HCT116 (cell line): ENCODE measurements at regions of chr1 and their contacts with region 1.

Region 1: DNA sequence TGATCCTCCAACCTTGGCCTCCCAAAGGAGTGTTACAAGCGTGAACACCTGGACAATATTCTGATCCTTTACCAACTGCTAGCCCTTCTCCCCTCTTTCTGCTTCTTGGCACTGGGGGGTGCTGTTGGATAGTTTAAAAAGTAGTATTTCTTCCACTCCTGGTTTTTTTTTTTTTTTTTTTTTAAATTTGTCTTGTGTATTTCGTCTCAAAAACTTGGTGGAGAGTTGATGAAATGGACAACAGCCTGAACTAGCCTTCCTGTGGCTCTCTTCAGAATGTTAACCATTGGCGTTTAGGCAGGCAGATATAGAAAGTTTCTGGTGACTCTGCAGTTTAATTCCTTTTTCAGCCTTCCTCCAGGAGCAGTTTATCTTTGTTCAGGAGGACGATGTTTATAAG is 69.7 kb upstream of the USP24 start:
- DNase-seq: peak; percentile 29
- ATAC-seq: peak; percentile 81
- H3K4me3 ChIP-seq: no peak overlapping the region
- H3K27ac ChIP-seq: no peak overlapping the region
- H3K4me1 ChIP-seq: peaks cover 0 to 14% of the 10 kb centered on the region in 2 experiments; a peak in 1 of 4 replicates
- H3K27me3 ChIP-seq: no peaks in the 10 kb centered on the region
- CTCF ChIP-seq: peak; percentile 53 to 76 (median 73)
- POLR2A ChIP-seq: no peak
- RAD21 ChIP-seq: peak; percentile 82

Region 2: GRCh38 chr1:54791880-54792522 is 492.9 kb before region 1 on chr1:
- CTCF ChIA-PET with region 1: no interaction called
- POLR2A ChIA-PET with region 1: no interaction called
- RAD21 ChIA-PET with region 1: no interaction called
- intact Hi-C with region 1: no loop called
- DNase-seq: peak; percentile 51
- ATAC-seq: peak; percentile 54
- H3K4me3 ChIP-seq: no peak overlapping the region
- H3K27ac ChIP-seq: no peak overlapping the region
- H3K4me1 ChIP-seq: peaks cover 6 to 17% of the 10 kb centered on the region in 2 experiments; a peak in 3 of 4 replicates
- H3K27me3 ChIP-seq: no peaks in the 10 kb centered on the region
- CTCF ChIP-seq: peak; percentile 71 to 97 (median 93); a peak in 5 of 6 replicates
- POLR2A ChIP-seq: no peak
- RAD21 ChIP-seq: peak; percentile 81

Region 3: DNA sequence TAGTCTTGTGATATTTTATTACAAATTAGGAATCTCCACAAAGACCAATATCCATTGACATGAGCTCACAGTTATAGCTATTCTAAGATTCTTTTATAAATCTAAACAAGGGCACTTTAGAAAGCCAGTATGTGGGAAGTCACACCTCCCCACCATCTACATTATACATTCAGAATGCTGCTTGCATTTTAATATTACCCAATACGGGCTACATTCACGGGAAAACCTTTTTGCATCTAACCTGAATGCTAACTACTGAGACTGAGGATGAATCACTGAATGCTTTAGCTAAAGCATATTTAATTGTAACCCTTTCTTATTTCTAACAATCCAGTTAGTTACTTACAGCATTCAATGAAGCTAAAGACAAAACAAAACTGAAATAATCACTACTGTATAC is 192.4 kb before region 1 on chr1:
- CTCF ChIA-PET with region 1: no interaction called
- POLR2A ChIA-PET with region 1: no interaction called
- RAD21 ChIA-PET with region 1: no interaction called
- intact Hi-C with region 1: no loop called
- DNase-seq: no peak
- ATAC-seq: no peak
- H3K4me3 ChIP-seq: no peak overlapping the region
- H3K27ac ChIP-seq: no peak overlapping the region
- H3K4me1 ChIP-seq: no peaks in the 10 kb centered on the region
- H3K27me3 ChIP-seq: no peaks in the 10 kb centered on the region
- CTCF ChIP-seq: no peak
- POLR2A ChIP-seq: no peak
- RAD21 ChIP-seq: no peak

Region 4: GRCh38 chr1:55337801-55338447 is 53.1 kb after region 1 on chr1:
- CTCF ChIA-PET with region 1: interaction called, 8 read pairs
- POLR2A ChIA-PET with region 1: interaction called, 4 read pairs
- RAD21 ChIA-PET with region 1: interaction called in 1 of 2 experiments, 5 read pairs
- intact Hi-C with region 1: loop called (anchors 5 kb)
- DNase-seq: peak; percentile 36
- ATAC-seq: peak; percentile 90
- H3K4me3 ChIP-seq: no peak overlapping the region
- H3K27ac ChIP-seq: no peak overlapping the region
- H3K4me1 ChIP-seq: no peaks in the 10 kb centered on the region
- H3K27me3 ChIP-seq: no peaks in the 10 kb centered on the region
- CTCF ChIP-seq: peak; percentile 42 to 58 (median 44); a peak in 4 of 6 replicates
- POLR2A ChIP-seq: no peak
- RAD21 ChIP-seq: peak; percentile 71

Region 5: GRCh38 chr1:55893155-55893554 is 608.3 kb after region 1 on chr1:
- CTCF ChIA-PET with region 1: no interaction called
- POLR2A ChIA-PET with region 1: no interaction called
- RAD21 ChIA-PET with region 1: no interaction called
- intact Hi-C with region 1: loop called (anchors 2 kb)
- DNase-seq: peak; percentile 53
- ATAC-seq: peak; percentile 95
- H3K4me3 ChIP-seq: no peak overlapping the region
- H3K27ac ChIP-seq: no peak overlapping the region
- H3K4me1 ChIP-seq: no peaks in the 10 kb centered on the region
- H3K27me3 ChIP-seq: no peaks in the 10 kb centered on the region
- CTCF ChIP-seq: peak; percentile 47 to 59 (median 55); a peak in 5 of 6 replicates
- POLR2A ChIP-seq: no peak
- RAD21 ChIP-seq: peak; percentile 74

Region 6: DNA sequence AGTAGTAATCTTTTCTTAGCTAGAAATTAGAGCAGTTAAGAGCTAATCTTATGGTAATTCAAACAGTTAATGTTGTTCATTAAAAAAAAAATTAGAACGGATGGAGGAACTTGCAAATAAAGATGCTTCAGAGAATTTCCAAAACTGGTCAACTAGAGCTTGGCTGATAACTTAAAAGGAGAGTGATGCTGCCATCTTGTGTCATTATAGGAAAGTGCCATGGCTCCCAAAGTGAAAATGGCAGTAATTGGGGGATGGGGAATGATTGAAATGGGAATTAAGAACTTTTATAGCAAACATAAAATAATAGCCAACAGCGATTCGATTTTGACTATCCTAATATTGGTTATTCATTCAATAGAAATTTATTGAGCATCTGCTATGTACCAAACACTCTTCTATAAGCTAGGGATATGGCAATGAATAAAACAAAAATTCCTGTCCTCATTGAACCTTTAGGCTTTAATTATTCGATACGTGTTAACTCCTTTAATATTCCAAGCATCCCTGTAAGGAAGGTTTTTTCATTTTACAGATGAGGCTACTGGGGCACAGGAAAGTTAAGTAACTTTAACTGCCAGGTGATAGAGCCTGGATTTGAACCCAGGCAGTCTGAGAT is 1300.2 kb after region 1 on chr1:
- CTCF ChIA-PET with region 1: interaction called, 23 read pairs
- POLR2A ChIA-PET with region 1: no interaction called
- RAD21 ChIA-PET with region 1: interaction called in 1 of 2 experiments, 4 read pairs
- intact Hi-C with region 1: loop called (anchors 1 kb)
- DNase-seq: peak; percentile 39
- ATAC-seq: peak; percentile 76
- H3K4me3 ChIP-seq: no peak overlapping the region
- H3K27ac ChIP-seq: no peak overlapping the region
- H3K4me1 ChIP-seq: peaks cover 0 to 5% of the 10 kb centered on the region in 2 experiments; a peak in 2 of 4 replicates
- H3K27me3 ChIP-seq: no peaks in the 10 kb centered on the region
- CTCF ChIP-seq: peak; percentile 68 to 90 (median 70); a peak in 5 of 6 replicates
- POLR2A ChIP-seq: no peak
- RAD21 ChIP-seq: peak; percentile 90

Region 7: DNA sequence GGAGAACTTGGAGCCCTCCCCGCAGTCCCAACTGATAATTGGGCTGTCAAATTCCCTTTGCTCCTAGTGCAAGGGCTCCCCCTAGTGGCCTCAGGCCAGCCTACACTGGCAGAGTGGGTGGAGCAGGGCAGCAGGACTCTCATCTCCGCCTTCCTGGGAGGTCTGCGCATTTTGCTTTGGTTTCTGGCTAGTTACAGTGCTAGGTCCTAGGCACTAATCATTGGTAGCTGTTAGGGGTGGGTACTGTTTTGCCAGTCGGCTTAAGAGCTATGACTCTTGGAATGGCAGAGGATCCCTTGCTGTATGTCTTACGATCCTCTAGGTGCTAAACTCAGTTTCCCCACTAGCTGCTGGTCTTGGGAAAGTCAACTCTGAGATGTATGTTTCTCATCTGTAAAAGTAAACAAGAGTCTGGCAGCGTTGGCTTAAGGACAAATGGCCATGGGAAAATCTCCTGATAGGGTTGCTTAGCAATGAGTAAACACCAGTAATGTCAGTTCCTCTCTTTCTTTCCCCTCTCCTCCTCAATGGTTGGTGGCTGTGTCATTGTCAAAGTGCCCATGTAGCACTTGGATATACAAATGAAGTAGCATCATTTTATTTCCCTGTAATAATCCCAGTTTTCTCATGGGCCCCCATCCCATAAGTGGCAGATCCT is 1536.4 kb after region 1 on chr1:
- CTCF ChIA-PET with region 1: no interaction called
- POLR2A ChIA-PET with region 1: no interaction called
- RAD21 ChIA-PET with region 1: no interaction called
- intact Hi-C with region 1: loop called (anchors 1 kb)
- DNase-seq: peak; percentile 51
- ATAC-seq: peak; percentile 97
- H3K4me3 ChIP-seq: no peak overlapping the region
- H3K27ac ChIP-seq: no peak overlapping the region
- H3K4me1 ChIP-seq: no peaks in the 10 kb centered on the region
- H3K27me3 ChIP-seq: peaks cover 5% of the 10 kb centered on the region
- CTCF ChIP-seq: peak; percentile 68 to 98 (median 97); a peak in 5 of 6 replicates
- POLR2A ChIP-seq: no peak
- RAD21 ChIP-seq: peak; percentile 88